Lower leg skin (tissue), 4 donors: ENCODE measurements at regions of chr22 and their contacts with region 1.

Region 1: DNA sequence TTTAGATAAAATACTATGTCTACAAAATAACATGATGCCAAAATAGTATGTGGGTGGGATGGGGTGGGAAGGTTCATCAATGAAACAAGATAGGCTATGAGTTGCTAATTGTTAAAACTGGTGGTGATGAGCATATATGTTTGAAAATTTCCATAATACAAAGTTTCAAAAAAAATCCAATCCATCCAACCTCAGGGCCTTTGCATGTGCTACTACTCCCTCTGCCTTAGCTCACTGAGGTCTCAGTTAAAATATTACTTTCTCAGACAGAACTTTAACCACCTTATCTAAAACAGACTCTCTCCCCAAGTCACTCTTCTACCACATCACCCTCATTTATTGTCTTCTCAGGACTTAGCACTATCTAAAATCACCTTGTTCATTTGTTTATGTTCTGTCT is 201.1 kb downstream of the TTC28 start:
- DNase-seq: no peak
- H3K4me3 ChIP-seq: no peak overlapping the region
- CTCF ChIP-seq: no peak
- POLR2A ChIP-seq: no peak

Region 2: DNA sequence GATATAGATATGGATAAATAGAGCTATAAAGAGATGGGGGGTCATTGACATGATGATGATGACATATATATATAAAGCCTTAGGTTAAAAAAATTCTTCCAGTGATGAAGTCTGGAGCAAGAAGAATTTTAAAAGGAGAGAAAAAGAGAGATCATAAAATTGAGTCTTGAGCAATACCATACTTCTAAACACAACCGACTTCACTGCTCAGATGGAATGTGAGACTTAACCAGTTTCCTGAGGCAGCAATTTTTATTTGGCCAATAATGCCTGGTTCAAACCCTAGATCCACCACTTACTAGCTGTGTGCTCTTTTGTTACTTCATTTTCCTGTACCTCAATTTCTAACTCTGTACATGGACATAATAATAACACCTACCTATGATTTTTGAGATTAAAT is 28.5 kb before region 1 on chr22:
- intact Hi-C with region 1: loop called (anchors 1 kb)
- DNase-seq: no peak
- H3K4me3 ChIP-seq: no peak overlapping the region
- CTCF ChIP-seq: no peak
- POLR2A ChIP-seq: no peak